ENCODE measurements at regions of chr1 and their contacts with region 1.

Region 1: GRCh38 chr1:224329842-224330753 is at the start of gene NVL:
- DNase-seq: peak; percentile 96
- H3K4me3 ChIP-seq: peak within 1 kb of the TSS; percentile 79
- H3K27ac ChIP-seq: peak within 1 kb of the TSS; percentile 97
- H3K4me1 ChIP-seq: peaks cover 13% of the 10 kb centered on the region
- H3K27me3 ChIP-seq: no peaks in the 10 kb centered on the region
- CTCF ChIP-seq: no peak
- total RNA-seq, gene NVL: 52.5 and 54.8 TPM in 2 replicates

Region 2: GRCh38 chr1:223700942-223701637 is 629.0 kb before region 1 on chr1:
- CTCF ChIA-PET with region 1: interaction called, 5 read pairs
- POLR2A ChIA-PET with region 1: no interaction called
- intact Hi-C with region 1: loop called (anchors 2 kb)
- DNase-seq: peak; percentile 76
- H3K4me3 ChIP-seq: no peak overlapping the region
- H3K27ac ChIP-seq: peak overlapping the region; percentile 70
- H3K4me1 ChIP-seq: peaks cover 26% of the 10 kb centered on the region
- H3K27me3 ChIP-seq: no peaks in the 10 kb centered on the region
- CTCF ChIP-seq: no peak

Region 3: DNA sequence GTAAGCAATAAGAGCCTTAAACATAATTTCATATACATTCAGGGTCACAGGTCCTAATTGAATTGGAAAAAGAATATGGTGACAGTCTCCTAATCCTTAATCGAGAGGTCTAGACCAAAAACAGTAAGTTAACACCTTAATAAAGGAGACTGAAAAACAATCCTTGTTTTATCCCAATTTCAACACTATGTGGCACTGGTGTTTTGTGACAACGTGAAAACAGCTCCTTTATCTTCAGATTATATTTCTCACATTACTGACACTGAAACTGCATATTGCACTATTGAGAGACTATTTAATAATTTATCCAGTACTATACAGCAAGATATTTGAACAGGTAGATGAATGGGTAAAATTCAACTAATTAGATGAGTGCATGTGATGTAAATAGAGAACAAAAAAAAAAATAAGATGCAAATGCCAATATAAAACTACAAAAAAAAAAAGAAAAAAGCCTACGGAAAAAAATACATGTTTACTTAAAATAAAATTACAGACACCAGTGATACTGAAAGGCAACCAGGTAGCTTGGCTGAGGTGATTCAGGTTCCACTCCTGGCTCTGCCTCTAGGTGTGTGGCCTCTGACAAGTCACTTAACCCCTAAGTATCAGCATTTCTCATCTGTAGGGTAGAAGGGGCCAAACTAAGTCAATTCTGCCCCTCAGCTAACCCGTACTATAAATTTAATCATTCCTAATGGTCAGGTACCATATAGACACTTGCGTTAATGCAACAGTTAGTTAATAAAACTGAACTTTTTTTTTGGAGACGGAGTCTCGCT is 518.3 kb before region 1 on chr1:
- CTCF ChIA-PET with region 1: no interaction called
- POLR2A ChIA-PET with region 1: no interaction called
- intact Hi-C with region 1: loop called (anchors 10 kb)
- DNase-seq: peak; percentile 61
- H3K4me3 ChIP-seq: no peak overlapping the region
- H3K27ac ChIP-seq: no peak overlapping the region
- H3K4me1 ChIP-seq: no peaks in the 10 kb centered on the region
- H3K27me3 ChIP-seq: no peaks in the 10 kb centered on the region
- CTCF ChIP-seq: peak; percentile 63

Region 4: GRCh38 chr1:224080115-224080774 is 249.9 kb before region 1 on chr1:
- CTCF ChIA-PET with region 1: no interaction called
- POLR2A ChIA-PET with region 1: no interaction called
- intact Hi-C with region 1: no loop called
- DNase-seq: no peak
- H3K4me3 ChIP-seq: no peak overlapping the region
- H3K27ac ChIP-seq: no peak overlapping the region
- H3K4me1 ChIP-seq: peaks cover 8% of the 10 kb centered on the region
- H3K27me3 ChIP-seq: no peaks in the 10 kb centered on the region
- CTCF ChIP-seq: no peak

Region 5: GRCh38 chr1:224113918-224114786 is 215.9 kb before region 1 on chr1 and contains the start of gene FBXO28:
- CTCF ChIA-PET with region 1: interaction called, 4 read pairs
- POLR2A ChIA-PET with region 1: no interaction called
- intact Hi-C with region 1: loop called (anchors 1 kb)
- DNase-seq: peak; percentile 98
- H3K4me3 ChIP-seq: peak within 1 kb of the TSS; percentile 90
- H3K27ac ChIP-seq: peak within 1 kb of the TSS; percentile 93
- H3K4me1 ChIP-seq: peaks cover 16% of the 10 kb centered on the region
- H3K27me3 ChIP-seq: no peaks in the 10 kb centered on the region
- CTCF ChIP-seq: no peak
- total RNA-seq, gene FBXO28: 39.0 and 45.8 TPM in 2 replicates

Measured in A673 (cell line).